ENCODE measurements at regions of chr9 and their contacts with region 1.

Region 1: GRCh38 chr9:33290247-33291030 is at the start of gene NFX1:
- DNase-seq: peak; percentile 99
- H3K4me3 Mint-ChIP-seq: peak within 1 kb of the TSS; percentile 87
- H3K27ac Mint-ChIP-seq: peak within 1 kb of the TSS; percentile 99
- H3K4me1 Mint-ChIP-seq: peaks cover 55% of the 10 kb centered on the region
- H3K27me3 Mint-ChIP-seq: no peaks in the 10 kb centered on the region
- total RNA-seq, gene NFX1: 32.4 to 32.6 TPM

Region 2: GRCh38 chr9:32968101-32969011 is 322.1 kb before region 1 on chr9:
- CTCF ChIA-PET with region 1: no interaction called
- intact Hi-C with region 1: no loop called
- DNase-seq: peak; percentile 78
- H3K4me3 Mint-ChIP-seq: no peak overlapping the region
- H3K27ac Mint-ChIP-seq: no peak overlapping the region
- H3K4me1 Mint-ChIP-seq: no peaks in the 10 kb centered on the region
- H3K27me3 Mint-ChIP-seq: no peaks in the 10 kb centered on the region

Region 3: DNA sequence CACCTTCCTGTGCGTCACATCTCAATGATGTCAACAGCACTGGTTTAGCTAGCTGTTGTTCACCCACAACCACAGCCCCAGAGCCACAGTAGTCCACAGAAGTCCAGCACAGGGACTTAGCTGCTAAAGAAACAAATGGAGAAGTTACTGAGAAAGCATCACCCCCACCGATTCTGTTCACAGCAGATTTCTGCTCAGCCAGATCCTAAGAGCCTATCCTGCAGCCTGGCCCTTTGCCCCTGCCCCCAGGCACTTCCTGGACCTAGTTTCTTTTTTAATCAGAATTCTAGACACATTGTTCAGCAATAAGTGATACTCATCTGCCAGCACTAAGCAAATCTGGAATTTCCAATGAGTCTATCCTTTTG is 130.7 kb before region 1 on chr9:
- CTCF ChIA-PET with region 1: no interaction called
- intact Hi-C with region 1: loop called (anchors 2 kb)
- DNase-seq: peak; percentile 87
- H3K4me3 Mint-ChIP-seq: peak overlapping the region; percentile 64
- H3K27ac Mint-ChIP-seq: peak overlapping the region; percentile 97
- H3K4me1 Mint-ChIP-seq: peaks cover 92% of the 10 kb centered on the region
- H3K27me3 Mint-ChIP-seq: no peaks in the 10 kb centered on the region

Region 4: GRCh38 chr9:33306037-33306436 is 15.6 kb after region 1 on chr9:
- CTCF ChIA-PET with region 1: interaction called, 5 read pairs
- intact Hi-C with region 1: loop called (anchors 1 kb)
- DNase-seq: peak; percentile 69
- H3K4me3 Mint-ChIP-seq: no peak overlapping the region
- H3K27ac Mint-ChIP-seq: no peak overlapping the region
- H3K4me1 Mint-ChIP-seq: peaks cover 10% of the 10 kb centered on the region
- H3K27me3 Mint-ChIP-seq: no peaks in the 10 kb centered on the region

Region 5: GRCh38 chr9:33374634-33375213 is 84.3 kb after region 1 on chr9:
- CTCF ChIA-PET with region 1: interaction called, 6 read pairs
- intact Hi-C with region 1: loop called (anchors 1 kb)
- DNase-seq: peak; percentile 88
- H3K4me3 Mint-ChIP-seq: no peak overlapping the region
- H3K27ac Mint-ChIP-seq: no peak overlapping the region
- H3K4me1 Mint-ChIP-seq: peaks cover 7% of the 10 kb centered on the region
- H3K27me3 Mint-ChIP-seq: no peaks in the 10 kb centered on the region

Region 6: GRCh38 chr9:33452828-33453271 is 162.4 kb after region 1 on chr9:
- CTCF ChIA-PET with region 1: interaction called, 8 read pairs
- intact Hi-C with region 1: loop called (anchors 1 kb)
- DNase-seq: peak; percentile 82
- H3K4me3 Mint-ChIP-seq: no peak overlapping the region
- H3K27ac Mint-ChIP-seq: peak overlapping the region; percentile 83
- H3K4me1 Mint-ChIP-seq: peaks cover 72% of the 10 kb centered on the region
- H3K27me3 Mint-ChIP-seq: no peaks in the 10 kb centered on the region

Region 7: GRCh38 chr9:33721674-33722358 is 431.4 kb after region 1 on chr9:
- CTCF ChIA-PET with region 1: no interaction called
- intact Hi-C with region 1: loop called (anchors 5 kb)
- DNase-seq: peak; percentile 90
- H3K4me3 Mint-ChIP-seq: no peak overlapping the region
- H3K27ac Mint-ChIP-seq: no peak overlapping the region
- H3K4me1 Mint-ChIP-seq: no peaks in the 10 kb centered on the region
- H3K27me3 Mint-ChIP-seq: peaks cover 7% of the 10 kb centered on the region

Region 8: GRCh38 chr9:34637356-34638137 is 1347.1 kb after region 1 on chr9 and contains the start of gene SIGMAR1:
- CTCF ChIA-PET with region 1: no interaction called
- intact Hi-C with region 1: no loop called
- DNase-seq: peak; percentile 94
- H3K4me3 Mint-ChIP-seq: peak within 1 kb of the TSS; percentile 92
- H3K27ac Mint-ChIP-seq: peak within 1 kb of the TSS; percentile 89
- H3K4me1 Mint-ChIP-seq: peaks cover 37% of the 10 kb centered on the region
- H3K27me3 Mint-ChIP-seq: no peaks in the 10 kb centered on the region
- total RNA-seq, gene SIGMAR1: 58.9 TPM

Measured in activated naive CD4-positive, alpha-beta T cell treated with anti-CD3 and anti-CD28 coated beads for 36 hours (primary cell).